ENCODE measurements at regions of chr7 and their contacts with region 1.

Region 1: GRCh38 chr7:43729214-43729923 is at the start of gene COA1:
- DNase-seq: peak; percentile 92
- H3K4me3 ChIP-seq: peak within 1 kb of the TSS; percentile 68 to 93 (median 87)
- H3K27ac ChIP-seq: peak within 1 kb of the TSS; percentile 72
- H3K4me1 ChIP-seq: peaks cover 6% of the 10 kb centered on the region
- H3K27me3 ChIP-seq: no peaks in the 10 kb centered on the region
- CTCF ChIP-seq: no peak
- total RNA-seq, gene COA1: 34.8 to 51.6 TPM

Region 2: DNA sequence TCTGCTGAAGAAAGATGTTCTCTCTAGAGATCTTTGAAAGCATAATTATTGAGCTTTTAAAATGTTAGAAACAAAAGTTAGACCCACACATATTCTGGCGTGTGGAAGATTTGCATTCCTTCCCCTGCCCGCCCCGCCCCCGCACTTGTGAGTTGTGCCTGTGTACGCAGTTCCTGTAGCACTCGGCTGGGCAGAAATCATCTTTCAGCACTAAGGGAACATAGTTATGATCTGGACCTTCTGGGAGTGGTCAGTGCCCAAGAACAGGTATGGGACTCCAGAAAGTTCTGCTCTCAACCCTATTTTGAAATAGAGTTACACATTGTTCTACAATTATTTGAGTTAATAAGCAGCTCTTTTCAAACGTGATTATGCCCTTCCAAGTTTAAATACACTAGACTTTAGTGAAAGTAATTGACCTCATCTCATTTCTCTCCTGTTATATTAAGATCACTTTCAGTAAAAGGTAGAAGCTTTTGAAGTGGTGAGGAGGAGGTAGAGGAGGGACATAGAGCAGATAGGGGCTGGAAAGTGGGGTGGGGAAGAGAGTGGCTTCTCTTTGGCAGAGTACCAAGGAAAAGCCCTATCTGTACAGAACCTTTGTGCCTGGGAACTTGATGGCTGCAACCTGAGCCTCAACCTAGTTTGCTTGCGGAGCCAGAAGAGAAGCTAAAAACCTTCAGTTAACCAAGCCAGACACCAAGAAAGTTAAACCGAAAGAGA is 34.8 kb after region 1 on chr7:
- CTCF ChIA-PET with region 1: no interaction called
- dilution Hi-C with region 1: no loop called
- in situ Hi-C with region 1: no loop called
- intact Hi-C with region 1: loop called (anchors 5 kb)
- DNase-seq: peak; percentile 67
- H3K4me3 ChIP-seq: peak overlapping the region in 1 of 3 experiments; percentile 8
- H3K27ac ChIP-seq: peak overlapping the region; percentile 42
- H3K4me1 ChIP-seq: peaks cover 24% of the 10 kb centered on the region
- H3K27me3 ChIP-seq: no peaks in the 10 kb centered on the region
- CTCF ChIP-seq: no peak

Region 3: GRCh38 chr7:43799589-43799988 is 70.2 kb after region 1 on chr7:
- CTCF ChIA-PET with region 1: no interaction called
- dilution Hi-C with region 1: no loop called
- in situ Hi-C with region 1: no loop called
- intact Hi-C with region 1: loop called (anchors 1 kb)
- DNase-seq: peak; percentile 46
- H3K4me3 ChIP-seq: no peak overlapping the region
- H3K27ac ChIP-seq: no peak overlapping the region
- H3K4me1 ChIP-seq: no peaks in the 10 kb centered on the region
- H3K27me3 ChIP-seq: no peaks in the 10 kb centered on the region
- CTCF ChIP-seq: peak; percentile 22 to 51

Region 4: DNA sequence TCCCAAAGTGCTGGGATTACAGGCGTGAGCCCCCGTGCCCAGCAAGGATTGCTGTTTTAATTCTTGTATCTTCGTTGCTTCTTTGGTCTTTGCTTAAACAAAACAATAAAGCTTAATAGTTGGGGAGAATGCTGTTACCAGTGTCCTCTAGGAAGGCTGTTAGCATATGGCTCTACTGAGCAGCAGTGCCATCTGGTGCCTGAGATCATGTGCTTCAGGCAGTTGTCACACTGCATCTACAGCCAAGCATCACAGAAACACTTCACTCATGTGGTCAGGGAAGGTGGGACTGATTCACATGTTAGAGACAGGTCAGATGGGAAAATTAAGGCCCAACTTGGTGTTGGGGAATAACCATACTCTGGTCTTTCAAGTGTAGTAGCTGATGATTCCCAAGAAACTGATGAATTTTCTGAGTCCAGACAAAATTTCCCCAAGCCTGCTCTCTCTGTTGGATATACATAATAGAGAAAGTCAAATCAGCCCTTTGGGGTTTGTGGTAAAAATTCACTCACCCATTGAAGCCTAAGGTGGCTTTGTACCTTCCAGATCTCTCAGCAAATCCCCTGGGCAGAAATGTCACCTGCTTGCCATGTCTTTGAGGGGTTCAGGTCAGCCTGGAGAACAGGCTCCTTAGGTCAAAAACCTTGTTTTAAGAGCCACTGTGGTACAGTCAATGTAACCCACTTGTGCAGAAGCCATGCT is 225.3 kb after region 1 on chr7:
- CTCF ChIA-PET with region 1: no interaction called
- dilution Hi-C with region 1: no loop called
- in situ Hi-C with region 1: no loop called
- intact Hi-C with region 1: loop called (anchors 5 kb)
- DNase-seq: peak; percentile 66
- H3K4me3 ChIP-seq: no peak overlapping the region
- H3K27ac ChIP-seq: no peak overlapping the region
- H3K4me1 ChIP-seq: no peaks in the 10 kb centered on the region
- H3K27me3 ChIP-seq: no peaks in the 10 kb centered on the region
- CTCF ChIP-seq: peak; percentile 56 to 73